Activated CD4-positive, alpha-beta memory T cell treated with anti-CD3 and anti-CD28 coated beads for 36 hours (primary cell): ENCODE measurements at regions of chr5 and their contacts with region 1.

Region 1: GRCh38 chr5:81751009-81751835 is at the start of gene SSBP2:
- DNase-seq: peak; percentile 98
- H3K4me3 Mint-ChIP-seq: peak within 1 kb of the TSS; percentile 86
- H3K27ac Mint-ChIP-seq: peak within 1 kb of the TSS; percentile 74
- H3K4me1 Mint-ChIP-seq: peaks cover 22% of the 10 kb centered on the region
- H3K27me3 Mint-ChIP-seq: no peaks in the 10 kb centered on the region
- total RNA-seq, gene SSBP2: 13.0 to 14.2 TPM

Region 2: DNA sequence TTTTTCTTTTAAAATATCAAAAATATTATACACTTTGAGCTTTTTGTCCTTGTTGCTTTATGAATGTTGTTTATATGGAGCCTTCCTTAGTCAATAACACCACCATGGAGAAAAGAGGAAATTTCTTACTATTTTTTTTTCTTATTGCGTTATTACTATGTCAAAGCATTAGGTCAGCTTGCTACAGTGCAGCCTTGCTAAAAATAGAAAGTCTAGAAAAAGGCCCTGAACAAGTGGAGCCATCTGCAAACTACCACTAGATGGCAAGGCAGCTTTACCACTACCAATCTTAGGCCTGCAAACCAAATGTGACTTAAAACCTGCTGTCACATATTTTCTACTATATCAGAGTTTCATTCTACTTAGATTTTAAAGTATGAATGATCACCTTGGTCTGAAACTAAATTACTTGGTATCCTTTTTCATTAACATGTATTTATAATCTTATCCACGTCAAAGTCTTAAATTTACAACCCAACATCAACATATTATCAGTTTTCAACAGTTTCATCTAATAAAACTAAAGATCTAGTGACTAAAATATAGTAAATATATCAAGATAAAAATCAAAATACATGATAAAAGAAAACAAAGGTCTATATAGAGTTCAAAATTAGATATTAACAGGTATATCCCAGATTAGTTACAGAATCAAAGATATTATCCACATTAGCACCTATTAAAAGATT is 244.2 kb before region 1 on chr5:
- CTCF ChIA-PET with region 1: interaction called, 3 read pairs
- POLR2A ChIA-PET with region 1: no interaction called
- intact Hi-C with region 1: loop called (anchors 1 kb)
- DNase-seq: peak; percentile 46
- H3K4me3 Mint-ChIP-seq: no peak overlapping the region
- H3K27ac Mint-ChIP-seq: no peak overlapping the region
- H3K4me1 Mint-ChIP-seq: no peaks in the 10 kb centered on the region
- H3K27me3 Mint-ChIP-seq: no peaks in the 10 kb centered on the region

Region 3: GRCh38 chr5:81544351-81545018 is 206.7 kb before region 1 on chr5:
- CTCF ChIA-PET with region 1: no interaction called
- POLR2A ChIA-PET with region 1: no interaction called
- intact Hi-C with region 1: no loop called
- DNase-seq: no peak
- H3K4me3 Mint-ChIP-seq: no peak overlapping the region
- H3K27ac Mint-ChIP-seq: no peak overlapping the region
- H3K4me1 Mint-ChIP-seq: peaks cover 13% of the 10 kb centered on the region
- H3K27me3 Mint-ChIP-seq: no peaks in the 10 kb centered on the region

Region 4: GRCh38 chr5:81779125-81779915 is 28.1 kb after region 1 on chr5:
- CTCF ChIA-PET with region 1: interaction called, 6 read pairs
- POLR2A ChIA-PET with region 1: interaction called, 12 read pairs
- intact Hi-C with region 1: loop called (anchors 1 kb)
- DNase-seq: peak; percentile 50
- H3K4me3 Mint-ChIP-seq: peak overlapping the region; percentile 70
- H3K27ac Mint-ChIP-seq: peak overlapping the region; percentile 72
- H3K4me1 Mint-ChIP-seq: peaks cover 19% of the 10 kb centered on the region
- H3K27me3 Mint-ChIP-seq: no peaks in the 10 kb centered on the region

Region 5: GRCh38 chr5:81971712-81972495 is 220.7 kb after region 1 on chr5 and contains the start of gene ATG10:
- CTCF ChIA-PET with region 1: no interaction called
- POLR2A ChIA-PET with region 1: interaction called, 11 read pairs
- intact Hi-C with region 1: loop called (anchors 1 kb)
- DNase-seq: peak; percentile 91
- H3K4me3 Mint-ChIP-seq: peak within 1 kb of the TSS; percentile 87
- H3K27ac Mint-ChIP-seq: peak within 1 kb of the TSS; percentile 98
- H3K4me1 Mint-ChIP-seq: peaks cover 20% of the 10 kb centered on the region
- H3K27me3 Mint-ChIP-seq: no peaks in the 10 kb centered on the region
- total RNA-seq, gene ATG10: 8.5 to 9.7 TPM

Region 6: DNA sequence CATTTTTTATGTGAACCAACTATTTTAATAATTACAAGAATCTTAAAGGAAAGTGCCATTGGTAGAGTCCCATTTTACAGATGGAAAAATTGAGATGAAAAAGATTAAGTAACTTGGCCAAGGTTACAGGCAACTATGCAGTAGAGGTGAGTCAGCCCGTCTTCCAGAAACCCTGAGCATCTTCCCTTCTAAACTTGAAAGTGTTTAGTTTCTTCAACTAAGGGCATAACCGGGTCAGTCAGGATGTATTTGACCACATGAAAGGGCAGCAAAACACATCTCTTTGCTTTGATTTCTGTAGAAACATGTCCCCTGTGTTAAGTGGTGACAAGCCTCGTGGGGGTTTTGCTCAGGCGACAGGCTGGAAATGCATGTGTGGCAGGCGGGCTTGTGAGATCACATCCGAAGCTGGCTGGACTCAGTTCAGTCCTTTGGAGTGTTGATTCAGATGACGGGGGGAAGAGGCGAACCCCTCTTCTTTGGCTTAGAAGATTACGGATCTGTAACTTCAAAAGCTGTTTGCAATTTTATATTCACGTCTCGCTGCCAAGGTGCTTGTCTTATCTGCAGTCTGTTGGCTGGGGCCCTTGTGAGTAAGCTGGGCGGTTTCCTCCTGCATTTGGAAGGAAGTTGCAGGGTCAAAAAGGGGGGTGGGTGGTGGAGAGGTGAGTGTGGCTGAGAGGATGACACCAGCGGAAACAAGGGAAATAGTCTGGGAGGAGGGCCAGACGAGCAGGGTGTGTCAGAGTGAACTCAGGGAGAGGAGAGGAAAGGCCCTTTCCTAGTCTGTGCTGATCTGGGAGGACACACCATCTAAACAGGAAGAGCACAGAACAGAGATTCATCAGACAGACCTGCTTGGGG is 605.8 kb after region 1 on chr5:
- CTCF ChIA-PET with region 1: no interaction called
- POLR2A ChIA-PET with region 1: no interaction called
- intact Hi-C with region 1: loop called (anchors 5 kb)
- DNase-seq: peak; percentile 88
- H3K4me3 Mint-ChIP-seq: peak overlapping the region; percentile 62
- H3K27ac Mint-ChIP-seq: peak overlapping the region; percentile 99
- H3K4me1 Mint-ChIP-seq: peaks cover 52% of the 10 kb centered on the region
- H3K27me3 Mint-ChIP-seq: no peaks in the 10 kb centered on the region